ENCODE measurements at regions of chr12 and their contacts with region 1.

Region 1: GRCh38 chr12:93441617-93442410 is at the start of gene UBE2N:
- H3K4me3 Mint-ChIP-seq: peak within 1 kb of the TSS; percentile 87
- H3K27ac Mint-ChIP-seq: peak within 1 kb of the TSS; percentile 94
- H3K4me1 Mint-ChIP-seq: peaks cover 48% of the 10 kb centered on the region
- H3K27me3 Mint-ChIP-seq: no peaks in the 10 kb centered on the region

Region 2: GRCh38 chr12:93378373-93379325 is 63.2 kb before region 1 on chr12:
- intact Hi-C with region 1: loop called (anchors 2 kb)
- H3K4me3 Mint-ChIP-seq: peak overlapping the region; percentile 99
- H3K27ac Mint-ChIP-seq: peak overlapping the region; percentile 95
- H3K4me1 Mint-ChIP-seq: peaks cover 62% of the 10 kb centered on the region
- H3K27me3 Mint-ChIP-seq: no peaks in the 10 kb centered on the region

Region 3: DNA sequence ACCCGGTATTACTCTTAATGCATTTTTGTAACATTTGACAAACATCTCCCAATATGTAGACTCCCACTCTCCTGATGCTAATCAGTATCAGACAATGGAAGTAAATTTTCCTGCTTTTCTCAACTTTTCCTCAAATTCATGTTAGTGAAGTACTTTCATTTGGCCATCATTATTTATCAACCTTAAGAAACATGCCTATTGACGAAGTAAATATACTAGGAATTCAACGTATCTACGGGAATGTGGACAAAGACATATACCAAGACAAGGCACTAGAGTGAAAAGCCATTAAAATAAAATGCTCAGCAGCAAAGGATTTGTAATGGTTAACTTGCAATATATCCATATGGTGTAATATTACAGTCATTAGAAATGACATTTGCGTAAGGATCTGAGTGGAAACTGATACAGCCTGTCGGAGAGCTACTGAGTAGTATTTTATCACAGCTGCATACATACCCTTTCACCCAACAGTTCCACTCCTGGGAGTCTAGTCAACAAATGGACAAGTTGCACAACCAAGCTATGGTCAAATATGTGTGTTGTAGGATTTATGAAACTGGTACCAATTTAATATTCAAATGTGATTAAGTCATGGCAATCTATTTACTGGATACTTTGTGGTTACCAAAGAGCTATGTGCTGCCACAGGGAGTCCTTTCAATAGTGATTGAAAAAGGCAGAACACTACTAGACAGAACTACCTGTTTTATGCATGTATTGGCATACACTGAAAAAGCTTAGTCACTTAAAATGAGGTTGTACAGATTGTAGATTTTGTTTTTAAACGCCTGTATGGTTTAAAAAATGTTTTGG is 37.6 kb before region 1 on chr12:
- intact Hi-C with region 1: no loop called
- H3K4me3 Mint-ChIP-seq: no peak overlapping the region
- H3K27ac Mint-ChIP-seq: no peak overlapping the region
- H3K4me1 Mint-ChIP-seq: peaks cover 9% of the 10 kb centered on the region
- H3K27me3 Mint-ChIP-seq: no peaks in the 10 kb centered on the region

Region 4: DNA sequence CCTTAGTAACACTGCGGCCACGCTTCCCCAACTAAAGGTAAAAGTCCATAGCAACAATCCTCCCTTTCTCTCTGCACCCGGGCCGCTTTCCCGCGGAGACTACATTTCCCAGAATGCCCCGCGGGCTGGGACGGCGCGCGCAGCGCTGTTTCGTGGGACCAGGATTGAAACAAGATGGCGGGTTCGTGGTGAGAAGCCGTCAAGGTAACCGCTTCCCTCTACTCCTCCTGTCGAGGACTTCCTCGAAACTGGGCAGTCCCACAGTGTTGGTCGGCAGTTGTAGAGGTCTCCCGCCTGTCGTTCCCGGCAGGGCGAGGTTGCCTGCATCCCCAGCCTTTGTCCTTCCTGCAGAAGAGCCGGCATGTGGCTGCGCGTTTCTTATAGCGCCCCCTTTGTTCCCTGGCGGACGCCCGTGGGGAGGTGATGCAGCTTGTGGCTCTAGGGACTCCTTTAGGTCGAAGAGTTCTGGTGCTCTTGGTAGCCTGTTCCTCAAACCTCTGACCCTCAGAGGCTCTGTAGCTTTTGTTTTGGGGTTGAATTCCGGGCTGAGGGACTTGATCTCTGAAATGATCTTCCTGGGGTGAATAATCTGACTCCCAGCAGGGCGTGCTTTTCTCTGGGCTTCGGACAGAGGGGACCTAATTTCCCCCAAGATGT is 25.7 kb after region 1 on chr12 and contains the start of gene MRPL42:
- intact Hi-C with region 1: loop called (anchors 2 kb)
- H3K4me3 Mint-ChIP-seq: peak within 1 kb of the TSS; percentile 81
- H3K27ac Mint-ChIP-seq: peak within 1 kb of the TSS; percentile 89
- H3K4me1 Mint-ChIP-seq: peaks cover 19% of the 10 kb centered on the region
- H3K27me3 Mint-ChIP-seq: no peaks in the 10 kb centered on the region